Activated CD8-positive, alpha-beta T cell treated with anti-CD3 and anti-CD28 coated beads for 36 hours (primary cell): ENCODE measurements at regions of chr12 and their contacts with region 1.

Region 1: DNA sequence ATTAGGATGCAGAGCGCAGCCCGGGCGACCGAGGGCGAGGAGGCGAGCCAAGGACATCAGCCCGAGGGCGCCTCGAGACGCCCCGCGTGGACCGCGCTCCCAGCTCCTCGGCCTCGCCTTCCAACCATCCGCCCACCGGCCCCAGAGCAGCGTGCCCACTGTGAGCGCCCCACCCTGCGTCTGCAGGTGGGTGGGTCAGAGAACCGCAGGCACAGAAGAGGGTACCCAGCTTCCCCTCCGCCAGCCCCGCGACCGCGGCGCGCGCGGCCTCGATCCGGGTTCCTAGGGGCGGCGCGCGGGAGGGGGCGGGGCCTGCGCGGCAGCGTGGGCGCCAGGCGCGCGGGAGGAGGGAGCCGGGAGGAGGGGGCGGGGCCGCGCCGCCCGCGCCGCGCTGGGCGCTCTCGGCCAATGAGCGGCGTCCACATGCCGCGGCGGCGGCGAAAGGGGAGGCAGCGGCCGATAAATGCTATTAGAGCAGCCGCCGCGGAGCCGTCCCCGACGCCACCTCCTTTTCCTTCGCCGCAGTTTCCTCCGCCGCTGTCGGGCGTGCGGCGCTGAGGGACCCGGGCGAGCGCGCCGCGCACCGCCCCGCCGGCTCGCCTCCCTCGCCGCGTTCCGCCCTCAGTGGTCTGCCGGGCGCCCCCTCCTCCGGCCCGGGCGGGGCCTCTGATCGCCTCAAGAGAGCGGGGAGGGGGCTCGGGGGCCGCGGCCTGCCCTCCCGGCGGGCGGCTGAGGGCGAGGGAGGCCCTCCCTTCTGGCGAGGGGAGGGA is at the start of gene ATP2A2:
- DNase-seq: peak; percentile 89
- ATAC-seq: peak; percentile 84
- H3K4me3 Mint-ChIP-seq: peak within 1 kb of the TSS; percentile 94
- H3K27ac Mint-ChIP-seq: peak within 1 kb of the TSS; percentile 88
- H3K4me1 Mint-ChIP-seq: peaks cover 39% of the 10 kb centered on the region
- H3K27me3 Mint-ChIP-seq: peaks cover 3% of the 10 kb centered on the region
- CTCF ChIP-seq: no peak
- total RNA-seq, gene ATP2A2: 107 to 111 TPM

Region 2: DNA sequence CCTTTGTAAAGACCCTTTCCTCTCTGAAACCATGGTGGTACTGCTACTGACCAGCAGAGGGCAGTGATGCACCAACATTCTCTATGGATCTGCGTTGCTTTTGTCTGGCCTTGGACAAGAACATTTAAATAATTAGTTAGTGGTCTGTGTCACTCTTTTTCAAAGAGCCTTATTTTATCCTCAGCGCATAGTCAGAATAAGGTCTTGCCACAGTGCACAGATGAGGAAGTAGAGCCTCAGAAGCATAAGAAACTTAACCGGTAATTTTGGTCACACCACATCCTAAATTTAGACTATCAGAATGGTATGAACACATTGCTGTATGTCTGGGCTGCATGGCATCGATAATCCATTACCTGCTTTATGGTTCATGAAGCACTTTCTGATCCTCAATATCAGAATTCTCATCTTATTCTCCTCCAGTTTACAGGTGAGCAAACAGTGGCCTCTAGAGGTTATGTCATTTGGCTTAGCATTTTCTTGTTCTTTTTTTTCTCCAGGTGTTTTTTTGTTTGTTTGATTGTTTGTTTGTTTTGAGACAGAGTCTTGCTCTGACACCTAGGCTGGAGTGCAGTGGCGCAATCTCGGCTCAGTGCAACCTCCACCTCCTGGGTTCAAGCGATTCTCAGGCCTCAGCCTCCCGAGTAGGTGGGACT is 180.5 kb before region 1 on chr12:
- CTCF ChIA-PET with region 1: interaction called, 17 read pairs
- POLR2A ChIA-PET with region 1: no interaction called
- intact Hi-C with region 1: no loop called
- DNase-seq: peak; percentile 78
- ATAC-seq: peak; percentile 78
- H3K4me3 Mint-ChIP-seq: no peak overlapping the region
- H3K27ac Mint-ChIP-seq: peak overlapping the region; percentile 51
- H3K4me1 Mint-ChIP-seq: peaks cover 8% of the 10 kb centered on the region
- H3K27me3 Mint-ChIP-seq: peaks cover 2% of the 10 kb centered on the region
- CTCF ChIP-seq: peak; percentile 90

Region 3: GRCh38 chr12:110245369-110245772 is 35.6 kb before region 1 on chr12:
- CTCF ChIA-PET with region 1: no interaction called
- POLR2A ChIA-PET with region 1: no interaction called
- intact Hi-C with region 1: no loop called
- DNase-seq: peak; percentile 68
- ATAC-seq: peak; percentile 87
- H3K4me3 Mint-ChIP-seq: no peak overlapping the region
- H3K27ac Mint-ChIP-seq: no peak overlapping the region
- H3K4me1 Mint-ChIP-seq: no peaks in the 10 kb centered on the region
- H3K27me3 Mint-ChIP-seq: peaks cover 3% of the 10 kb centered on the region
- CTCF ChIP-seq: peak; percentile 50

Region 4: DNA sequence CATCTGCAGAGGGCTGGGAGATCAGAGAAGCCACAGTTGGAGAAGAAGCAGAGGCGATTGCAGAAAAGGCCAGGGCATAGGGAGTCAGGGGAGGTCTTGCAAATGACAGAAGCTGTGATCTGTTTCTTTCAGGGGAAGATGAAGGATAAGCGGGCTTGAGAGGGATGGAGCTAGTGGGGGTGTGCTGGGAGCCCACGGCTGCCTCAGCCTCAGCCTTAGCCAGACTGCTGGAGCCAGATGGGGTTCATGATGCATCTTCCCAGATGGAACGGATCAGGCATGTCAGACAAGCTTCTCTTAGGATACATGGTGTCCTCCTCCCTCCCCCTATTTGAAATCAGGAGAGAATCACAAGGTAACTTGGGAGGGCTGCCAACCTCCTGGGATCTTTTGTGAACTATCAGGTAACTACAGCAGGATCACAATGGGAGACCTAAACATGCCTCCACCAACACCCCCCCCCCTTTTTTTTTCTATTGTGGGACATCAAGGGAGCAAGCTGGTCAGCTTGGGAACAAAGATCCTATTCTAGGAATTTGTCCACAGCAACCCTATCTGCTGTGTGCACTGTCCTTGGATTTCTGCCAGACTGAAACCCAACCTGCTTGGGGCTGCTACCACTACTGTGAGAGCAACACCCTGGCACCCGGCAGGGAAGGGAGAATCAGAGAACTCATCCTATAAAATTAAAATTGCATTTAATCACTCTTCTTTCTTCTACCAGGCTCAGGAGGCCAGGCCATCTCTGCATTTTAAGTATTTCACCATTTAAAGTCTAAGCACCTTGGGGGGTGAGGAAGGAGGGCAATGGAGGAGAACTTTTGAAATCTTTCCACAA is 10.6 kb before region 1 on chr12:
- CTCF ChIA-PET with region 1: no interaction called
- POLR2A ChIA-PET with region 1: interaction called, 11 read pairs
- intact Hi-C with region 1: no loop called
- DNase-seq: no peak
- ATAC-seq: no peak
- H3K4me3 Mint-ChIP-seq: no peak overlapping the region
- H3K27ac Mint-ChIP-seq: no peak overlapping the region
- H3K4me1 Mint-ChIP-seq: no peaks in the 10 kb centered on the region
- H3K27me3 Mint-ChIP-seq: peaks cover 3% of the 10 kb centered on the region
- CTCF ChIP-seq: no peak

Region 5: GRCh38 chr12:110301065-110301806 is 20.3 kb after region 1 on chr12:
- CTCF ChIA-PET with region 1: interaction called, 3 read pairs
- POLR2A ChIA-PET with region 1: interaction called, 22 read pairs
- intact Hi-C with region 1: no loop called
- DNase-seq: no peak
- ATAC-seq: peak; percentile 39
- H3K4me3 Mint-ChIP-seq: no peak overlapping the region
- H3K27ac Mint-ChIP-seq: peak overlapping the region; percentile 75
- H3K4me1 Mint-ChIP-seq: peaks cover 29% of the 10 kb centered on the region
- H3K27me3 Mint-ChIP-seq: no peaks in the 10 kb centered on the region
- CTCF ChIP-seq: no peak